OCI-LY7 (cell line): ENCODE measurements at regions of chr15 and their contacts with region 1.

Region 1: GRCh38 chr15:81296673-81297072 is 27.3 kb downstream of the STARD5 start:
- DNase-seq: peak; percentile 94
- H3K4me3 ChIP-seq: peak overlapping the region; percentile 92
- H3K27ac ChIP-seq: peak overlapping the region; percentile 98
- H3K4me1 ChIP-seq: peaks cover 73% of the 10 kb centered on the region
- CTCF ChIP-seq: no peak

Region 2: DNA sequence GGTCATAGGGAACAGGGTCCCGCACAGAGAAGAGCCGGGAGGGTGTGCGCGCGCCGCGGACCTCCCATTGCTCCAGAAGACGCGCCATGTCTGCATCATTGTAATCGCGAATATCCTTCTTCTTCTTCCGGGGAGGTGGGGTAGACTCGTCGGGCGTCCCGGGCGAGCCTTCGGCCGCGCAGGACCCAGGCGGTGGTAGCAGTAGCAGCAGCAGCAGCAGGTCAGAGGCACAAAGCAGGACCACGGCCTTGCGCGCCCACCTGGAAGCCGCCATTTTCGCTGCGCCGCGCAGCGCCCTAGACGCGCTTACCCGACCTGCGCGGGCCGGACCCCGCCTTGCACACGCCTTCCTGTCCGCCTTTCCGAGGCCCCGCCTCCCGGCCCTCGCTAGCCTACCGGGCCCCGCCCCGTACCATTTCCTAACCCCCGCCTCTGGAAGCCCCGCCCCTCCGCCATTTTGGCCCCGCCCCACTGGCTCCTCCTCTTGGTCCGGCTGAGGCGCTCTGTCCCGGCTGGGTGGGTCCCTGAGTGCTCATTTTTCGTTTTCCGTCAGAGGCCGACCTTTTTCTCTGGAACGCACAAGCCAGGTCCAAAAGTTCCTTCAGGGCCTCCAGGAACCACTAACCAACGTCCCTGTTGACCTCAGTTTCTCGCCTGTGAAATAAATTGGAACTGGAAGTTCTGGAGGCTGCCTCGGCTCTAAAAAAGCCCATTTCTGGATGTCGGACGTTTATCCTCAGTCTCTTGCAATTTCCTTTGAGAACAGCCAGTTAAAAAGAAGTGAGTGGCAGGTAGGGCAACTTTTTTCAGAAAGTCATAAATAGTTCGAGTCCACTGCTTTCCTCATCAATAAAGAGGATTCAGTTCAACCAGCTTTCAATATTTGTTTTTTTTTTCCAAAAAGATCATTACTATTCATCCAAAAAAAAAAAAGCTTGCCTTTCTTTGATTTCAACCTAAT is 306.9 kb before region 1 on chr15 and contains the start of gene MESD:
- CTCF ChIA-PET with region 1: no interaction called
- POLR2A ChIA-PET with region 1: no interaction called
- intact Hi-C with region 1: loop called (anchors 2 kb)
- DNase-seq: peak; percentile 97
- H3K4me3 ChIP-seq: peak within 1 kb of the TSS; percentile 86
- H3K27ac ChIP-seq: peak within 1 kb of the TSS; percentile 47
- H3K4me1 ChIP-seq: peaks cover 38% of the 10 kb centered on the region
- CTCF ChIP-seq: no peak
- total RNA-seq, gene MESD: 14.9 and 17.3 TPM in 2 replicates

Region 3: GRCh38 chr15:81286621-81287121 is 10.0 kb before region 1 on chr15:
- CTCF ChIA-PET with region 1: interaction called, 4 read pairs
- POLR2A ChIA-PET with region 1: interaction called, 27 read pairs
- intact Hi-C with region 1: loop called (anchors 1 kb)
- DNase-seq: no peak
- H3K4me3 ChIP-seq: no peak overlapping the region
- H3K27ac ChIP-seq: peak overlapping the region; percentile 68
- H3K4me1 ChIP-seq: peaks cover 62% of the 10 kb centered on the region
- CTCF ChIP-seq: no peak

Region 4: GRCh38 chr15:81317642-81318017 is 21.0 kb after region 1 on chr15:
- CTCF ChIA-PET with region 1: interaction called, 3 read pairs
- POLR2A ChIA-PET with region 1: interaction called, 6 read pairs
- intact Hi-C with region 1: loop called (anchors 1 kb)
- DNase-seq: no peak
- H3K4me3 ChIP-seq: peak overlapping the region; percentile 54
- H3K27ac ChIP-seq: peak overlapping the region; percentile 92
- H3K4me1 ChIP-seq: peaks cover 66% of the 10 kb centered on the region
- CTCF ChIP-seq: no peak

Region 5: DNA sequence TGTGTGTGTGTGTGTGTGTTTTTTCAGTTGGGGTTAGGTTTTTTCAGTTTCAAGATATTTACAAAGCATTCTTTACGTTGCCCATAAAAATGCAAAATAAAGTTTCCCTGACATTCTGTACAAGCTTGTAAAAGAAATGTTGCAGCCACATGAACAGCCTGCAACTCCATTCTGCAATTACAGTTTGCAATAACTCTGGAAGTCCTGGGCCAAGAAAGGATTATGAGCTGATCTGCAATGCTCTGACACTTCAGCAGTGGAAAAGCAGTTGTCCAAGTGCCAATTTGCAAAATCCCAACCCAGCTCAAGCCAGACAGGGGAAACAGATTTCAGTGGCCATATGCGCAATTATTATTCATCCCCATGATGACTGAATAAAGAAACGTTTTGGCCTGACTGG is 427.0 kb after region 1 on chr15:
- CTCF ChIA-PET with region 1: no interaction called
- POLR2A ChIA-PET with region 1: no interaction called
- intact Hi-C with region 1: no loop called
- DNase-seq: no peak
- H3K4me3 ChIP-seq: no peak overlapping the region
- H3K27ac ChIP-seq: no peak overlapping the region
- H3K4me1 ChIP-seq: no peaks in the 10 kb centered on the region
- CTCF ChIP-seq: no peak

Region 6: DNA sequence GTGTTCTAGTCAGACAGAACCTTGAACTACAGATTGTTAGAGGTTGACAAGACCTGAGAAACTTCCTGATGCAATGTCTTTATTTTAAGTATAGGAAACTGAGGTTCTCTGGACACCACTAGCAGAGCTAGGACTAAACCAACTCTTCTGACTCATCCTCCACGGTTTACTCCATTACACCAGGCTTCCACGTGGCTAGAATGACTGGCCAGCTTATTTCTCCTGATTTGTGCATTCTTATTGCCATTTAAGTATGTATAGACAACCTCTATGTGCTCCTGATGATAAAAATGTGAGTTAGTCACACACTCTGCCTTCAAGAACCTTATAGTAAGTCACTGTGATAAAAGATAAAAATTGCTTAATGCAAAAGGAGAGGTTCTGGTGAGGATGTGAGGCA is 566.5 kb after region 1 on chr15:
- CTCF ChIA-PET with region 1: no interaction called
- POLR2A ChIA-PET with region 1: no interaction called
- intact Hi-C with region 1: loop called (anchors 1 kb)
- DNase-seq: no peak
- H3K4me3 ChIP-seq: no peak overlapping the region
- H3K27ac ChIP-seq: peak overlapping the region; percentile 30
- H3K4me1 ChIP-seq: peaks cover 92% of the 10 kb centered on the region
- CTCF ChIP-seq: no peak